ENCODE measurements at regions of chr6 and their contacts with region 1.

Region 1: DNA sequence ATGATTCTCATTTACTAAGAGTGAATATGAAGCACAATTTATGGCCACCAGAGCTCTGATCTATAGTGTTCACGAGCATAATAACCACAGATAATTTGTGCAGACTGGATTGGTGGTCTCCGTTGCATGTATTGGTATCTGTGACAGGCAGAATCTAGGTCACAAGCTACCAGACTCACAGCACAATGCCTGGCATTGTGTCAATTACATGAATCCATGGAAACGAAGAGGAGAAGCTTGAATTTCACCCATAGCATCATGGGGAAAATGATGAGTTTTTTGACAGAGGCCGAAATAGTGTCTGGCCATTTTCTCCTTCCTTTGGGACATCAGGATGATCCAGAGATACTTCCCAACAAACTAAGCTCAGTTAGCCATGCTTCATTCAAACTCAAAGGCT is 52.3 kb upstream of the TMEM170B start:
- DNase-seq: no peak
- ATAC-seq: no peak
- H3K4me3 ChIP-seq: no peak overlapping the region
- H3K27ac ChIP-seq: no peak overlapping the region
- H3K4me1 ChIP-seq: peaks cover 0 to 5% (median 0%) of the 10 kb centered on the region in 12 donors
- H3K27me3 ChIP-seq: no peaks in the 10 kb centered on the region
- CTCF ChIP-seq: no peak
- POLR2A ChIP-seq: no peak

Region 2: GRCh38 chr6:11241793-11242201 is 243.5 kb before region 1 on chr6:
- intact Hi-C with region 1: loop called in 5 of 10 experiments (anchors 2 to 10 kb)
- DNase-seq: peak; percentile 48 to 79 (median 63)
- ATAC-seq: peak; percentile 80 to 97 (median 90)
- H3K4me3 ChIP-seq: no peak overlapping the region
- H3K27ac ChIP-seq: no peak overlapping the region
- H3K4me1 ChIP-seq: peaks cover 0 to 21% (median under 1%) of the 10 kb centered on the region in 12 donors
- H3K27me3 ChIP-seq: no peaks in the 10 kb centered on the region
- CTCF ChIP-seq: peak; percentile 20 to 82 (median 58)
- POLR2A ChIP-seq: no peak

Region 3: DNA sequence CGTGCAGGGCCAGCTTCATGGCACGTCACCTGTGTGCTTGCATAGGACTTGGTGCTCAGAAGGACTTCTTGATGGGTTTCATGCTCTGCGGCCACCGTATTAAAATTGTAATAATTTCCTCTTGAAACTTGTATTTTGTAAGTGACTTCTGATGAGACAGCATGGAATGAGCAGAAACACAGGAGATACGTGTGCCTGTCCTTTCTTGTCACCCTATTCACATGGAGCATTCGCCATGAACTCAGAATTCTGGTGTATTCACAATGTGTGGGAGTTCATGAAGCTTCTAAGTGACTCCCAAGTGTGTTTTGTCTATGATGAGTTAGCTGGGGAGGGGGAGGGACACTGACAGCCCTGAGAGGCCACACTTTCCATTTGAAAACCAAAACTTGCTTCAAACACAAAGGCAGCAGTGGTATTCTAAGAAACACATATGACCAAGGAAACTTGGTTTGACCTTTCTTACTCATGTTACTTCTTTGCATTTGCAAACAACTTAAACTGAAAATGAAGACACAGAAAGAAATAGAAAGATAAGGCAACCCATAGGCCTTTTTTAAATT is 160.7 kb before region 1 on chr6:
- intact Hi-C with region 1: loop called in 1 of 10 experiments (anchors 5 kb)
- DNase-seq: no peak
- ATAC-seq: no peak
- H3K4me3 ChIP-seq: no peak overlapping the region
- H3K27ac ChIP-seq: peak overlapping the region in 1 of 12 donors; percentile 62
- H3K4me1 ChIP-seq: peaks cover 0 to 29% (median 0%) of the 10 kb centered on the region in 12 donors
- H3K27me3 ChIP-seq: no peaks in the 10 kb centered on the region
- CTCF ChIP-seq: no peak
- POLR2A ChIP-seq: no peak

Measured in heart left ventricle (tissue), 16 donors.